MCF 10A (cell line): ENCODE measurements at regions of chr22 and their contacts with region 1.

Region 1: GRCh38 chr22:42437488-42438292 is 5.5 kb upstream of the NFAM1 start:
- DNase-seq: peak; percentile 59
- H3K4me3 Mint-ChIP-seq: peak overlapping the region; percentile 68
- H3K27ac Mint-ChIP-seq: no peak overlapping the region
- H3K4me1 Mint-ChIP-seq: peaks cover 15% of the 10 kb centered on the region
- H3K27me3 Mint-ChIP-seq: no peaks in the 10 kb centered on the region
- CTCF ChIP-seq: peak; percentile 100

Region 2: DNA sequence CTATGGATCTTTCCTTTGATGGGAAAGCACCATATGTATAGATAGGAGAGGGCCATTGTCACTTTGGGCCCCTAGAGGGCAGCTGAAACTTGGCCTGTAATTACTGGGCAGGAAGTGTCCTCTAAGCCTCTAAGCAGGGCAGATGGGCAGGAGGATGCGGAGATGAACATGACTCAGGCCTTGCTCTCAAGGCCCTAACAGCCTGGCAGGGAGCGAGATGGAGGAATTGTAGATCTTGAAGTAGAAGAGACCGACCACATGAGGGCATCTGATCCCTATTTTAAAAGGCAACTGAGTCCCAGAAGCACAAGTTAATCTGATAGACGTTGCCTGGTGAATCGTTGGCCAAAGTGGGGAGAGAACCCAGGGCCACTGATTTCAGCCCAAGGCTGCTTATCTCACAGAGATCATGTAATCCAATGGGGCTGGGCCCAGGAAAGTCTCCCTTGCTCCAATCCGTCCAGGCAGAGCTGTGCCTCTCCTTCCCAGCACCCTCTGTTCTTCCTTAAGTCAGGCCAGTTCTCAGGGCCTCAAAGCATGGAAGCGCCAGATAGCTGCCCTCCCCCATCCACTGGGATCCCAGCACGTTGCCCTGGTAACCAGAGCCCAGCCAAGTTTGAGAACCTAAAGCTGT is 471.0 kb before region 1 on chr22:
- CTCF ChIA-PET with region 1: interaction called, 3 read pairs
- POLR2A ChIA-PET with region 1: no interaction called
- intact Hi-C with region 1: loop called (anchors 5 kb)
- DNase-seq: peak; percentile 76
- H3K4me3 Mint-ChIP-seq: no peak overlapping the region
- H3K27ac Mint-ChIP-seq: no peak overlapping the region
- H3K4me1 Mint-ChIP-seq: peaks cover 6% of the 10 kb centered on the region
- H3K27me3 Mint-ChIP-seq: no peaks in the 10 kb centered on the region
- CTCF ChIP-seq: peak; percentile 29

Region 3: GRCh38 chr22:42169055-42169469 is 268.6 kb before region 1 on chr22:
- CTCF ChIA-PET with region 1: interaction called, 36 read pairs
- POLR2A ChIA-PET with region 1: interaction called, 3 read pairs
- intact Hi-C with region 1: loop called (anchors 1 kb)
- DNase-seq: peak; percentile 67
- H3K4me3 Mint-ChIP-seq: no peak overlapping the region
- H3K27ac Mint-ChIP-seq: no peak overlapping the region
- H3K4me1 Mint-ChIP-seq: peaks cover 6% of the 10 kb centered on the region
- H3K27me3 Mint-ChIP-seq: no peaks in the 10 kb centered on the region
- CTCF ChIP-seq: peak; percentile 97

Region 4: DNA sequence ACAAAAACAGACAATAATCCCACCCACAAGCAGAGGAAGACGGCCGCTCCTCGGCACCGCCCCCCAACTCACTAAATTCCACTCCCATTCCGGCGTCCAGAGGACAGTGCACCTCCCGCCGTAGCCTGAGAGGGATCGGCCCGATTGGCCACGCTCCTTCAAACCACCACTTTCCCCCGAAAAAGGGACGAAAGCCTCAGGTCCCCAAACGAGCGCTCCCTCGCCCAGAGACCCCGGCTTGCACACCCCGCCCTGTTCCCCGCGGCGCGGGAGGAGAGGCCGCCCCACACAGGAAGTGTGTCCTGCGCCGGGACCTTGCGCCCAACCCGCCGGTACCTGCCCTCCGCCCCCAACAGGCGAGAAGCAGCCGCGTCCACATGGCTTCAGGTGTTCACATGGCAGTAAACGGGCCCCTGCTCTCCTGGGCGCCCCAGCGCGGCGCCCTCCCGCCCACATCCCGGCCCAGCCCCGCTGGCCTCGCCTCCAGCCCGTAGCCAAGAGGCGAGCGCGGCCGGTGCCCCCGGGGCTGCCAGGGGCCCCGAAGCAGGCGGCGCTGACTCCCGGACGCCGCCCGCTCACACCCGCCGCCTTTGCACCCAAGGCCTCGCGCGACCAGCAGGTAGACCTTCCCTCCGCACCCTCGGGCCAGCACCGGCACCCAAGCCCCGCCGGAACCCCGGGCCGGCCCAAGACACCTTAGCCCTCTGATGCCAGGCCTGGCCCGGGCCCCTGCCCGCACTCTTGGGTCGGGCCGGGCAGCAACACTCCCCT is 168.1 kb before region 1 on chr22:
- CTCF ChIA-PET with region 1: no interaction called
- POLR2A ChIA-PET with region 1: no interaction called
- intact Hi-C with region 1: loop called (anchors 5 kb)
- DNase-seq: peak; percentile 71
- H3K4me3 Mint-ChIP-seq: peak overlapping the region; percentile 92
- H3K27ac Mint-ChIP-seq: peak overlapping the region; percentile 79
- H3K4me1 Mint-ChIP-seq: peaks cover 21% of the 10 kb centered on the region
- H3K27me3 Mint-ChIP-seq: no peaks in the 10 kb centered on the region
- CTCF ChIP-seq: peak; percentile 6

Region 5: DNA sequence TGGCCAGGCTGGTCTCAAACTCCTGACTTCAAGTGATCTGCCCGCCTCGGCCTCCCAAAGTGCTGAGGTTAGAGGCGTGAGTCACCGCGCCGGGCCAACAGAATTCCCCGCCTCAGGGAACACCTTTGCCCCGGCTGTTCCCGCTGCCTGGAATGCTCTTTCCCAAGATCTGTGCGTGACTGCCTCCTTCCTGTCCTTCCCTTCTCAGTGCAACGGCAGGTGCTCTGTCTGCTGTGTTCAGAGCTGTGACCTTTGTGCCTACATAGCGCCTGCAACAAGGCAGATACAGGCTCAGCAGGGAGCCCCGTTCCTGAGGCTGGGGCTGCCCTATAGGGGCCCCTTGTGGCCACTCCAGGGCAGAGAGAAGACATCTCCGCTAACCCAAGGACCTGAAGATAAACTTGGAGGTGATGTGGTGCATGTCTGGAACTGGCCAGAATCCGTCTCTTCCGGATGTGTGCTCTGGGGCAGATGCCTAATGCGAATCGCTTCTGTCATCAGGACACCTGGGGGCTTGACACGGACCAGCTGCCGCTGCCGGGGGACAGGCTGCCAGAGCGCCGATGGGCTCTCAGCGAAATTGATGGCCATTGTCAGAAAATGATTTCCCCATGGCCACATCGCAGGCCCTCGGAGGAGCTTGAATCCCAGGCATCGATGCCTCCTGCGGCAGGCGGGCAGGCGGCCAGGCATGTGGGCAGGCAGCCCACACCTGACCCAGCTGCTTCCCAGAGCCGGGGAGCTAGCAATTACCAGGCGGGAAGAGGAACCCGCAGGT is 123.7 kb before region 1 on chr22:
- CTCF ChIA-PET with region 1: interaction called, 7 read pairs
- POLR2A ChIA-PET with region 1: interaction called, 4 read pairs
- intact Hi-C with region 1: loop called (anchors 5 kb)
- DNase-seq: peak; percentile 97
- H3K4me3 Mint-ChIP-seq: peak overlapping the region; percentile 43
- H3K27ac Mint-ChIP-seq: peak overlapping the region; percentile 55
- H3K4me1 Mint-ChIP-seq: peaks cover 44% of the 10 kb centered on the region
- H3K27me3 Mint-ChIP-seq: no peaks in the 10 kb centered on the region
- CTCF ChIP-seq: peak; percentile 40

Region 6: GRCh38 chr22:42357634-42358296 is 79.9 kb before region 1 on chr22:
- CTCF ChIA-PET with region 1: no interaction called
- POLR2A ChIA-PET with region 1: interaction called, 11 read pairs
- intact Hi-C with region 1: no loop called
- DNase-seq: peak; percentile 94
- H3K4me3 Mint-ChIP-seq: no peak overlapping the region
- H3K27ac Mint-ChIP-seq: peak overlapping the region; percentile 97
- H3K4me1 Mint-ChIP-seq: peaks cover 18% of the 10 kb centered on the region
- H3K27me3 Mint-ChIP-seq: no peaks in the 10 kb centered on the region
- CTCF ChIP-seq: no peak

Region 7: DNA sequence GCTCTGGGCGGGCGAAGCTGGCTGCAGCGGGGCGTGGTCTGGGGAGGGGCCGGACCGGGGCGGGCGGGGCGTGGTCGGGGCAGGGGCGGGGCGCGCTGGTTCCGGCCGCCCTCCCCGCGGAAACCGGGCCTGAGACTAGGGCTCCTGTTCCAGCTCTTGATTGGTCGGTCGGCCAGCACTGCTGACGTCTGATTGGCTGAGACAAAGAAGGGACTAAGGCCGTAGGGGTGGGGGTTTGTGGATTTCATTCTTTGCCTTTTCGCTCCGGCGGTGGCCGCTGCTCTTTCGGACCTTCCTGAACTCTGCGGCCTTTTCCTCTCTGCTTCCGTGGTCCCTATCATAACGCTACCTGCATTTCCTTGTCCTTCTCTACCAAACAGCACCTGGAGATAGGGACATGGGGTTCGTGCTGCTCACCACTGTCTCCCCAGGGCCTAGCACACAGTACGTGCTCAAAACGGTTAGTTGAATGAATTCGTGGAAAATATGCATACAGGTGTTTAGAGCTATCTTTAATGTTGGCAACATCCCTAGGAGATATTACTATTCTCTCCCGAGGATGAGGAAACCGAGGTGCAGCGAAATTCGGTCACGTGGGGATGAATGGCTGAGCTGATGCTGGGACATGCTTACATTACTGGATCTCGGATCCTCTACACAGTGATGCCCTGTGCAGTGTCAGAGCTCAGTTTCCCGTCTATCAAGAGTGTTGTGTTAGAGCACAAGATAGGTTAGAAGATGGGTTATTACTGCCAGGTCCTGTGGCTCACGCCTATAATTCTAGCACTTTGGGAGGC is 68.2 kb before region 1 on chr22:
- CTCF ChIA-PET with region 1: interaction called, 6 read pairs
- POLR2A ChIA-PET with region 1: interaction called, 9 read pairs
- intact Hi-C with region 1: loop called (anchors 1 kb)
- DNase-seq: peak; percentile 96
- H3K4me3 Mint-ChIP-seq: peak overlapping the region; percentile 85
- H3K27ac Mint-ChIP-seq: no peak overlapping the region
- H3K4me1 Mint-ChIP-seq: peaks cover 11% of the 10 kb centered on the region
- H3K27me3 Mint-ChIP-seq: no peaks in the 10 kb centered on the region
- CTCF ChIP-seq: no peak

Region 8: DNA sequence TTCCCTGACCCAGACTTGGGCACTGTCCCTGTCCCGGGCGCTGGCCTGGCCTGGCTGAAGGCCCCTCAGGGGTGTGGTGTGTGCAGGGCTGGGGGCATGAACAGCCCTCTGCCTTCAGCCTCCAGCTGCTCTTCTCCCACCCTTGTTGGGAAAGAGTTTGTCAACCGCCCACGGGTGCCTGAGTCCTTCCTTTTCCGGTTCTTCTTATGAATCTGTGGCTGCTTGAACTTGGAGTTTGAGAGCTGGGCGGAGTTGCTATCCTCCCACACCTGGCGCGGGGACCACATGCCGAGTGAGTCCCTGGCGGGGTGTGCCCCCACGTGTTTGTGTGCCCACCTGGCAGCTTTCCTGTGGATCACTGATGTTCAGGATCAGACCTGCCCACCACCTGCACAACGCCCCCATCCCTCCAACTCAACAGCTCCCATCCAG is 18.9 kb before region 1 on chr22:
- CTCF ChIA-PET with region 1: no interaction called
- POLR2A ChIA-PET with region 1: no interaction called
- intact Hi-C with region 1: no loop called
- DNase-seq: peak; percentile 18
- H3K4me3 Mint-ChIP-seq: no peak overlapping the region
- H3K27ac Mint-ChIP-seq: no peak overlapping the region
- H3K4me1 Mint-ChIP-seq: peaks cover 6% of the 10 kb centered on the region
- H3K27me3 Mint-ChIP-seq: no peaks in the 10 kb centered on the region
- CTCF ChIP-seq: no peak

Region 9: DNA sequence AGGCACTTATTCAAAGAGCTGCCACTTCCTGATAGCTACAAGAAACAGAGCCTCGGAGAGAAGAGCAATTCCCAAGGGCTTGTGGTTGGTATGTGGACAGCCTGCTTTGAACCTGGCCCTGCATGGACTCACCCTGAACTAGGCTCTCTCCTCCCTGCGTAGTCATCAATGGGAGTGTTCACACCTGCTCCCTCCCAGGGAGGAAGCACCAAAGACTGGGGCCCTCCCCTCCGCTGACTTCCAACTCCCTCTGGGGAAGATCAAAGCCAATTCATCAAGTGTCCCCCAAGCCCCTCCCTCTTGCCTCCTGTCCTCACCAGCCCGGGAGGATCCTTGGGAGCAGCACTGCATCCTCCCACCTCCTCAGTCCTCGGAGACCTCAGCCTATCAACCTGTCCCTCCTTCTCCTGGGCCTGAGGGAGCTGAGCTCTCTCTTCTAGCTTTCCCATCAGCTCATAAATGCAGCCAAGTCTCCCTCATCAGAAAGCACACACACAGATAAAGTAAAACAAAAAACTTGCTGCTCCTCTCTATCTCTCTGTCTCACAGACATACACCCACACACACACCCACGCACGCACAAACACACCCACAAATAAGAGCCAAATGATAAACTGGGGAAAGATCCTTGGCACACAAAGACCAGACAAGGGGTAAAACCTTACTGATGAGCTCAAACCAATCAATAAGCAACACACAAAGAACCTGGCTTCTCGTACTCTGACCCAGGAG is 279.7 kb after region 1 on chr22:
- CTCF ChIA-PET with region 1: no interaction called
- POLR2A ChIA-PET with region 1: no interaction called
- intact Hi-C with region 1: no loop called
- DNase-seq: peak; percentile 42
- H3K4me3 Mint-ChIP-seq: peak overlapping the region; percentile 13
- H3K27ac Mint-ChIP-seq: peak overlapping the region; percentile 39
- H3K4me1 Mint-ChIP-seq: peaks cover 24% of the 10 kb centered on the region
- H3K27me3 Mint-ChIP-seq: no peaks in the 10 kb centered on the region
- CTCF ChIP-seq: no peak